ENCODE measurements at regions of chr15 and their contacts with region 1.

Region 1: GRCh38 chr15:27358751-27359434 is 387.9 kb downstream of the GABRG3 start:
- DNase-seq: peak; percentile 41
- H3K4me3 ChIP-seq: no peak overlapping the region; a peak in 1 of 4 replicates
- H3K27ac ChIP-seq: no peak overlapping the region
- H3K4me1 ChIP-seq: no peaks in the 10 kb centered on the region; a peak in 1 of 4 replicates
- H3K27me3 ChIP-seq: no peaks in the 10 kb centered on the region
- CTCF ChIP-seq: peak; percentile 29
- EP300 ChIP-seq: no peak
- RAD21 ChIP-seq: peak; percentile 67

Region 2: GRCh38 chr15:27046880-27047279 is 312.0 kb before region 1 on chr15:
- CTCF ChIA-PET with region 1: interaction called, 12 read pairs
- POLR2A ChIA-PET with region 1: no interaction called
- DNase-seq: no peak
- H3K4me3 ChIP-seq: no peak overlapping the region
- H3K27ac ChIP-seq: no peak overlapping the region
- H3K4me1 ChIP-seq: peaks cover 0 to 7% of the 10 kb centered on the region in 2 experiments; a peak in 1 of 4 replicates
- H3K27me3 ChIP-seq: no peaks in the 10 kb centered on the region
- CTCF ChIP-seq: no peak
- EP300 ChIP-seq: no peak
- RAD21 ChIP-seq: no peak

Region 3: GRCh38 chr15:27342991-27343390 is 15.9 kb before region 1 on chr15:
- CTCF ChIA-PET with region 1: interaction called, 10 read pairs
- POLR2A ChIA-PET with region 1: no interaction called
- DNase-seq: peak; percentile 38
- H3K4me3 ChIP-seq: no peak overlapping the region
- H3K27ac ChIP-seq: no peak overlapping the region
- H3K4me1 ChIP-seq: peaks cover 0 to 4% of the 10 kb centered on the region in 2 experiments; a peak in 1 of 4 replicates
- H3K27me3 ChIP-seq: no peaks in the 10 kb centered on the region
- CTCF ChIP-seq: no peak
- EP300 ChIP-seq: no peak
- RAD21 ChIP-seq: no peak

Measured in SK-N-SH (cell line).